ENCODE measurements at regions of chr17 and their contacts with region 1.

Region 1: DNA sequence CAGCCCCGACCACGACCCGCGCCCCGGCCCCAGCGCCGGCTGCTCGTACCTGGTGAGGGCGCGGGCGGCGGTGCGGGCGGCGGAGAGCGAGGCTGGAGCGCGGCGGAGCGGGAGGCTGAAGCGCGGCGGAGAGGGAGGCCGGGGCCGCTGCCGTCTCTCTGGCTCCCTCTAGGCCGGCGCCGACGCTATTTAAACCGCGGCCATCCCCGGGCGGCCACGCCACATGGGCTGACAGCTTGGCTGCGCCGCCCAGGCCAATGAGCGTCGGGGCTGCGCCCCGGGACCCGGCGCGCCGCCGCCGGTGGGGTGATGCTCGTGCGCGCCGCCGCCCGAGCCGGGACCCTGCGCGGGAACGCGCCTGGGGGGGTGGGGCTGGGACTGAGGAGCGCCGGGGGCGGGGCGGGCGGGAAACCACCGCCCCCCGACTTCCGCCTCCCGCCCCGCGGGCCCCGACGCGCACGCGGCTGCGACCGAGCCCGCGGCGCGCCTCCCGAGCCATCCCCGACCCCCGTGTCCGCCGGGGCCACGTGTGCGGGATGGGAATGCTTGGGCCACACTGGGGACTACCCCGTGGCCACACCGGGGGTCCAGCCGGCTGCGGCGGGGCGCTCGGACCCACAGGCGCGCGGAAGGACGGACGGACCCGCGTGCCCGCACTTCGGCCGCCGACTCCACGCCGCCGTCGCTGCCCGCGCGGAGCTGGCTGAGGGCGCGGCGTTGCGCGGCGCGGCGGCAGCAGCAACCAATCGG is at the start of gene FASN:
- DNase-seq: peak; percentile 70 to 97
- H3K4me3 ChIP-seq: peak within 1 kb of the TSS; percentile 67
- H3K27ac ChIP-seq: peak within 1 kb of the TSS; percentile 88
- H3K4me1 ChIP-seq: peaks cover 40% of the 10 kb centered on the region
- H3K27me3 ChIP-seq: no peaks in the 10 kb centered on the region
- CTCF ChIP-seq: no peak; the same call in 1 of the 2 replicates
- total RNA-seq, gene FASN: 455 and 658 TPM in 2 replicates

Region 2: GRCh38 chr17:82037113-82037888 is 60.9 kb before region 1 on chr17 and contains the start of gene DCXR:
- CTCF ChIA-PET with region 1: interaction called, 4 read pairs
- POLR2A ChIA-PET with region 1: interaction called, 6 read pairs
- intact Hi-C with region 1: loop called (anchors 5 kb)
- DNase-seq: peak; percentile 85 to 98
- H3K4me3 ChIP-seq: peak within 1 kb of the TSS; percentile 66
- H3K27ac ChIP-seq: no peak within 1 kb of the TSS
- H3K4me1 ChIP-seq: 0 out of 2 replicates have a peak, but pooled peaks cover 6% of the 10 kb centered on the region
- H3K27me3 ChIP-seq: no peaks in the 10 kb centered on the region
- CTCF ChIP-seq: peak; percentile 61
- total RNA-seq, gene DCXR: 120 and 129 TPM in 2 replicates

Region 3: GRCh38 chr17:82077617-82078358 is 20.5 kb before region 1 on chr17:
- CTCF ChIA-PET with region 1: no interaction called
- POLR2A ChIA-PET with region 1: interaction called, 10 read pairs
- intact Hi-C with region 1: no loop called
- DNase-seq: no peak
- H3K4me3 ChIP-seq: no peak overlapping the region
- H3K27ac ChIP-seq: no peak overlapping the region
- H3K4me1 ChIP-seq: no peaks in the 10 kb centered on the region
- H3K27me3 ChIP-seq: no peaks in the 10 kb centered on the region
- CTCF ChIP-seq: no peak

Region 4: GRCh38 chr17:82112914-82113311 is 14.7 kb after region 1 on chr17:
- CTCF ChIA-PET with region 1: no interaction called
- POLR2A ChIA-PET with region 1: interaction called, 12 read pairs
- intact Hi-C with region 1: no loop called
- DNase-seq: no peak
- H3K4me3 ChIP-seq: no peak overlapping the region
- H3K27ac ChIP-seq: no peak overlapping the region
- H3K4me1 ChIP-seq: peaks cover 15% of the 10 kb centered on the region
- H3K27me3 ChIP-seq: no peaks in the 10 kb centered on the region
- CTCF ChIP-seq: no peak

Region 5: GRCh38 chr17:82138511-82138992 is 40.3 kb after region 1 on chr17:
- CTCF ChIA-PET with region 1: no interaction called
- POLR2A ChIA-PET with region 1: no interaction called
- intact Hi-C with region 1: no loop called
- DNase-seq: no peak
- H3K4me3 ChIP-seq: no peak overlapping the region
- H3K27ac ChIP-seq: no peak overlapping the region
- H3K4me1 ChIP-seq: no peaks in the 10 kb centered on the region
- H3K27me3 ChIP-seq: no peaks in the 10 kb centered on the region
- CTCF ChIP-seq: no peak

Region 6: DNA sequence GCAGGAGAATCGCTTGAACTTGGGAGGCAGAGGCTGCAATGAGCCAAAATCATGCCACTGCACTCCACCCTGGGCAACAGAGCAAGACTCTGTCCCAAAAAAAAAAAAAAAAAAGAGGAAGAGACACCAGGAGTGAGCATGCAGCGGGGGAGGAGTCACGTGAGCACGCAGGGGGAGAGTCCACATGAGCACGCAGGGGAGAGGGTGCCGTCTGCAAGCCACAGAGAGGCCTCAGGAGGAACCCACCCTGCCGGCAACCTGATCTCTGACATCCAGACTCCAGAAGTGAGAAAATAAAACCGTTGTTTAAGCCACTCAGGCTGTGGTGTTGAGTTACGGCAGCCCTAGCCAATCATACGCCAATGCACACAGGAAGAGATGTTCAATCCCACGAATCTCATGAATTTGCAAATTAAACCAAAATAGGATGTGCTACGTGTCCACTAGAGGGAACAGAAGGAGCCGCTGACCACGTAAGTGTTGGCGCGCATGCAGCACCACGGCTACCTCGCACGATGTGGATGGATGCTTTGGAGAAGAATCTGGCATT is 72.2 kb after region 1 on chr17:
- CTCF ChIA-PET with region 1: no interaction called
- POLR2A ChIA-PET with region 1: no interaction called
- intact Hi-C with region 1: no loop called
- DNase-seq: no peak
- H3K4me3 ChIP-seq: no peak overlapping the region
- H3K27ac ChIP-seq: no peak overlapping the region
- H3K4me1 ChIP-seq: no peaks in the 10 kb centered on the region
- H3K27me3 ChIP-seq: no peaks in the 10 kb centered on the region
- CTCF ChIP-seq: no peak

Region 7: GRCh38 chr17:82636626-82637598 is 538.7 kb after region 1 on chr17:
- CTCF ChIA-PET with region 1: no interaction called
- POLR2A ChIA-PET with region 1: interaction called, 16 read pairs
- intact Hi-C with region 1: no loop called
- DNase-seq: peak; percentile 47 to 81
- H3K4me3 ChIP-seq: no peak overlapping the region
- H3K27ac ChIP-seq: peak overlapping the region; percentile 75
- H3K4me1 ChIP-seq: no peaks in the 10 kb centered on the region
- H3K27me3 ChIP-seq: no peaks in the 10 kb centered on the region
- CTCF ChIP-seq: no peak

Measured in PC-9 (cell line).